ENCODE measurements at regions of chr14 and their contacts with region 1.

Region 1: GRCh38 chr14:82861313-82861712 is 1327.7 kb upstream of the SEL1L start:
- DNase-seq: no peak
- H3K4me3 ChIP-seq: no peak overlapping the region
- H3K27ac ChIP-seq: no peak overlapping the region
- H3K4me1 ChIP-seq: no peaks in the 10 kb centered on the region
- H3K27me3 ChIP-seq: no peaks in the 10 kb centered on the region
- CTCF ChIP-seq: no peak
- EP300 ChIP-seq: no peak
- RAD21 ChIP-seq: no peak

Region 2: DNA sequence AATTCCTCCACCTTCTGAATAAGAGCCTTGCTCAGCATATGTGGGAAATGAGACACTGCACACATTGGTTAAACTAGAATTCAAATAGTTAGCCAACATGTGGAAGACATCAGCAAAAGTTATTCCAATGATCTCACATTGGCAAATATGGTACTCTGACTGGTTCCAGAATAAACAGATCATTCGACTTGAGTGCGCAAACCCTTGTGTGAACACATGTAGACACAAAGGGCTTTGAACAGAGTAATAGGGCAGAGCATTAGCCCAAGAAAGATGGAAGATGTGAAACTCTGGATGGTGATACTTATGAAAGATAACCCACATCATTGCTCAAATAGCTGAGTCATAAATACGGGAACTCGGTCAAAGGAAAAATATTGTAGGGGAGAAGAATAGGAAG is 194.3 kb before region 1 on chr14:
- CTCF ChIA-PET with region 1: no interaction called
- POLR2A ChIA-PET with region 1: no interaction called
- DNase-seq: no peak
- H3K4me3 ChIP-seq: no peak overlapping the region
- H3K27ac ChIP-seq: no peak overlapping the region
- H3K4me1 ChIP-seq: no peaks in the 10 kb centered on the region
- H3K27me3 ChIP-seq: no peaks in the 10 kb centered on the region
- CTCF ChIP-seq: no peak
- EP300 ChIP-seq: no peak
- RAD21 ChIP-seq: no peak

Region 3: GRCh38 chr14:82872494-82872893 is 11.2 kb after region 1 on chr14:
- CTCF ChIA-PET with region 1: interaction called, 11 read pairs
- POLR2A ChIA-PET with region 1: no interaction called
- DNase-seq: peak; percentile 6
- H3K4me3 ChIP-seq: no peak overlapping the region
- H3K27ac ChIP-seq: no peak overlapping the region
- H3K4me1 ChIP-seq: no peaks in the 10 kb centered on the region
- H3K27me3 ChIP-seq: no peaks in the 10 kb centered on the region
- CTCF ChIP-seq: peak; percentile 57
- EP300 ChIP-seq: no peak
- RAD21 ChIP-seq: peak; percentile 36

Measured in SK-N-SH (cell line).